ENCODE measurements at regions of chr14 and their contacts with region 1.

Region 1: GRCh38 chr14:67695394-67695949 is at the start of gene RDH11:
- DNase-seq: peak; percentile 88
- H3K4me3 Mint-ChIP-seq: peak within 1 kb of the TSS; percentile 89
- H3K27ac Mint-ChIP-seq: peak within 1 kb of the TSS; percentile 89
- H3K4me1 Mint-ChIP-seq: peaks cover 30% of the 10 kb centered on the region
- H3K27me3 Mint-ChIP-seq: no peaks in the 10 kb centered on the region
- total RNA-seq, gene RDH11: 56.6 to 60.4 TPM

Region 2: DNA sequence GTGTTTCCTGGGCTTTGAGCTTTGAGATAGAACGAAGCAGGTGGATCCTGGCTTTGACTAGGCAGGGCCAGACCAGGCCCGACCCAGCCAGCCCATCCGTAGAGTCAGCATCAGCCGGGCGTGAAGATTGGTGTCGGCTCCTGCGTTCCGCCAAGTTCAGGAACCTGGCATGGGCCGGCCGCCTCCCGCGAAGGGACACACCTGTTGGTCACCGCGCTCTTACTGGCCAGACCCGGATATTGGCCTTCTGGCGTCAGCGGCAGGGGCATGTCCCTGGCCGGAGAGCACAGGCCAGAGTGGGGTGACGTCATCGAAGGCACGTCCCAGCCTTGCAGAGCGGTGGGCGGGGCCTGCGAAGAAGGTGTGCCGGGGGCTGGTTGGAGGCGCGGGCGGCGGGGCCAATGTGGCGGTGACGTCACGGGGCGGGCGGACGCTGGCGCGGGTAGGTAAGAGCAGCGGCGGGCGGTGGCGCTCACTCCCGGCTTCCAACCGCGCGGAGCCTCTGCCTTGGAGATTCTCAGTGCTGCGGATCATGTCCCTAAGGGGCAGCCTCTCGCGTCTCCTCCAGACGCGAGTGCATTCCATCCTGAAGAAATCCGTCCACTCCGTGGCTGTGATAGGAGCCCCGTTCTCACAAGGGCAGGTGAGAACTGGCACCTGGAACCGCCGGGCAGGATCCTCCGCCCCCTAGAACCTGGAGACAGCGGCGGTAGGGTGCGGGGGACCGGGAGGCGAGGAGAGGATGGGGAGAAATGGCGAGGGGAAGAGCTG is 75.8 kb before region 1 on chr14 and contains the start of gene ARG2:
- CTCF ChIA-PET with region 1: interaction called, 26 read pairs
- POLR2A ChIA-PET with region 1: interaction called, 6 read pairs
- DNase-seq: peak; percentile 96
- H3K4me3 Mint-ChIP-seq: peak within 1 kb of the TSS; percentile 78
- H3K27ac Mint-ChIP-seq: peak within 1 kb of the TSS; percentile 59
- H3K4me1 Mint-ChIP-seq: peaks cover 32% of the 10 kb centered on the region
- H3K27me3 Mint-ChIP-seq: peaks cover 17% of the 10 kb centered on the region
- total RNA-seq, gene ARG2: 6.8 to 7.7 TPM

Region 3: DNA sequence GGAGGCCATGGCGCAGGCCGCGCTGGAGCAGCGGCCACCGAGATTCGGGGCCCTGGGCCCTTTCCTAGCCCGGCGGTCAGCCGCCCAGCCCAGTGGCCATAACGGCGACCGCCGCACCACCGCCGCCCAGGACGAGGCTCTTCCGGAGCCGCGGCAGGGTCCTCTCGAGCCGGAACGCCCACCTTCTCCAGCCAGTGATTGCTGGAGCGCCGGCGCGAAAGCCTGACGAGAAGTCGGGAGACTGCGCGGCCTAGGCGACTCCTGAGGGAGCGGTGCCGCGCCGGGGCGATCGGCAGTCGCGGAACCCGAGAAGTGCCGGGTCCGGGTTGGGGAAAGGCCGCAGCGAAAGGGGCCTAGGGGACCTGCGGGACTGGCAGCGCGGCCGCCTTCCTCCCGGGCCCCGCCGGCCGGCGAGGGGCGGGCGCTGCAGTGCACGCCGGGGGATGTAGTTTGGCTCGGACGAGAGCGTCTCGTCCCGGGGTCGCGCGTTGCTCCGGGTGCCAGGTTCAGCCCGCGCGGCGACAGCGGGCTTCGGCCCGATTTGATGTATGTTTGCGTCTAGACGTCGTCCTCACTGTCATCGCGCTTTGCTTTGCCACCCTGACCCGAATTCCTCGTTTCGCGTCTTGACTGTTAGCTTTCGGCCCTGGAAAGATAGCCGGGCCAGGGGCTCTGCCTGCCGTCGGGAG is 20.8 kb before region 1 on chr14 and contains the start of gene VTI1B:
- CTCF ChIA-PET with region 1: interaction called, 6 read pairs
- POLR2A ChIA-PET with region 1: interaction called, 69 read pairs
- DNase-seq: peak; percentile 77
- H3K4me3 Mint-ChIP-seq: peak within 1 kb of the TSS; percentile 80
- H3K27ac Mint-ChIP-seq: peak within 1 kb of the TSS; percentile 75
- H3K4me1 Mint-ChIP-seq: peaks cover 32% of the 10 kb centered on the region
- H3K27me3 Mint-ChIP-seq: no peaks in the 10 kb centered on the region
- total RNA-seq, gene VTI1B: 73.3 to 77.3 TPM

Region 4: DNA sequence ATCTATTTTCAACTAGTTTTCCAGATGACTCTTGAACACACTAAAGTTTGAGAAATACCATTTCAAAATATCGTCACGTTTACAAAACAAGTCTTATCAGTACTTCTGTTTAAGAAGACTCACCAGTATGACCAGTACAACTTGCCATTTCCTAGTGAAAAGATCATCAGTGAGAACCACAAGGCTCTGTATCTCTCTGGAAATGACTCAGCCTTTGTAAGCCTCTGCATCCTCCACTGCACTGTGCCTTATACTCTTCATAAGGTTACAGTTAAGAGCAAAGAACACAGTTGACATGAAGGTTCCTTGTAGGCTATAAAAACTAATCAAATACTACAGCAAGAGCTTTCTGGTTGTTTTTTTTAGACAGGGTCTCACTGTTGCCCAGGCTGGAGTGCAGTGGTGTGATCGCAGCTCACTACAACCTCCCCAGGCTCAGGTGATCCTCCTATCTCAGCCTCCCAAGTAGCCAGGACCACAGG is 15.3 kb before region 1 on chr14:
- CTCF ChIA-PET with region 1: interaction called, 5 read pairs
- POLR2A ChIA-PET with region 1: interaction called, 69 read pairs
- DNase-seq: peak; percentile 47
- H3K4me3 Mint-ChIP-seq: no peak overlapping the region
- H3K27ac Mint-ChIP-seq: peak overlapping the region; percentile 66
- H3K4me1 Mint-ChIP-seq: peaks cover 36% of the 10 kb centered on the region
- H3K27me3 Mint-ChIP-seq: no peaks in the 10 kb centered on the region